Heart left ventricle (tissue), 16 donors: ENCODE measurements at regions of chr2 and their contacts with region 1.

Region 1: DNA sequence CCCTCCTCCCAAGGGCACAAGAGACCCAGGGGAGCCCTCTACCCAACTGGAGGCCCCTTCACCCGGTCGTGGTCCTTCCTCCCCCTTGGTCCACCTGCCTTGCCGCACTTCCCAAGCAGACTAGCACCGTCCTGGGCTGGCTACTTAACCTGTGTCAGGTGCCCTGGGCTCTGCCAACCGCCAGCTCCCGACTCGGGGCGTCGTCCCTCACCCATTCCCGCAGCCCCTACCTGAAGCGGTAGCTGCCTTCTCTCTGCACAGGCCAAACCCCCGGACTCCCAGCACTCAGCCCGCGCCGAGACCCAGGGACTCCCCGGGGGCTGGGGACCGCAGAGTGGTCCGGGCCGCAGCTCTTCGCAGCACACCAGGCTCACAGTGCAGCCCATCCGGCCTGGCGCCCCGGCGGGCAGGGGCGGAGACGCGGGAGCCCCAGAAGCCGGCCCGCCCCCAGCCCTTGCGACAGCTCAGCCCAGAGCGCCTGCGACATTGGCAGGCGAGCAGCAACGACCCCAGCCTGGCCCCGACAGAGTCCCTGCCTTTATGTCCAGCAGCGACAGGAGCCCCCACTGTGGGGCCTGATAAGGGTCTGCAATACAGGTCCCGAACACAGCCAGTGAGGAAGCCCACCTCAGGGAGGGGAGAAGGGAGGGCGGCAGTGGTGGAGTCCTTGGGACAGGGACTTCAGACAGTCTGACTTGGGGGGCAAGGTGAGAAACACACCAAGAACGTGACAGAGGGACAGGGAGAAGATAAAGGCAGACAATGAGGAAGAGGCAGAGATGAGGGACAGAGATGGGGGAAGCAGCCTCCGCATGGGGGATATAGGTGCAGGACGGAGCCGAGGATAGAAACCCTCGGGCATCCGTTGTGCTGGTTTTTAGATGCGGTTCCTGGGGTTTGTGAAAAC is 31.0 kb upstream of the TNS1 start:
- DNase-seq: peak in 3 of 5 donors; percentile 21 to 61 (median 29)
- ATAC-seq: no peak
- H3K4me3 ChIP-seq: peak overlapping the region in 4 of 12 donors; percentile 27 to 49 (median 47)
- H3K27ac ChIP-seq: peak overlapping the region in 1 of 12 donors; percentile 42
- H3K4me1 ChIP-seq: peaks cover 0 to 18% (median 9%) of the 10 kb centered on the region in 12 donors
- H3K27me3 ChIP-seq: peaks cover 0 to 5% (median 0%) of the 10 kb centered on the region in 9 donors
- CTCF ChIP-seq: no peak
- POLR2A ChIP-seq: no peak

Region 2: GRCh38 chr2:217993817-217994463 is 39.9 kb before region 1 on chr2:
- intact Hi-C with region 1: loop called in 9 of 10 experiments (anchors 2 to 5 kb)
- DNase-seq: peak in 4 of 5 donors; percentile 62 to 82 (median 71)
- ATAC-seq: peak; percentile 38 to 53 (median 44)
- H3K4me3 ChIP-seq: no peak overlapping the region
- H3K27ac ChIP-seq: peak overlapping the region in 3 of 12 donors; percentile 6 to 25 (median 10)
- H3K4me1 ChIP-seq: peaks cover 0 to 48% (median 25%) of the 10 kb centered on the region in 12 donors
- H3K27me3 ChIP-seq: no peaks in the 10 kb centered on the region
- CTCF ChIP-seq: peak; percentile 73 to 86 (median 80)
- POLR2A ChIP-seq: no peak

Region 3: DNA sequence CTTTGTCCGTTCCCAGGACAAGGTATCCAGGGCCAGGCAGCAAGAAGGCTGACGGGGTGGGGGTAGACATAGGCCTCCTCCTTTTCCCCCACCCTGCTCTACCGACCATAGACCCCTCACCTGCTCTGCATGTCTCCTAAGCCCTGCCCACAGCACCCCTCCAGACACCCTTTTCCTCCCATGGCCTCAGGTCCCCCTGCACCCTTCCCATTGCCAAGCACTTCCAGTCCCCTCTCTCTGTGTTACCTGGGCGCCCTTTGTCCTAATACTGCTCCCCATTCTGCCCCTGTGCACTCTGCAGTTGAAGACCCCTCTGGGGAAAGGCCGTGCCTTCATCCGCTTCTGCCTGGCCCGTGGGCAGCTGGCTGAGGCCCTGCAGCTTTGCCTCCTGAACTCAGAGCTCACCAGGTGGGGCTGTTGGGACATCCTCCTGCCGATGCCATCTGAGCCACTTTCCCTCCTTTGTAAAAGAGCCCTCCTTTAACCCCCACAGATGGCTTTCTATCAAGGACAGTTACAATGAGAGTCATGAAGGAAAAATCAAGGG is 38.7 kb after region 1 on chr2:
- intact Hi-C with region 1: loop called in 1 of 10 experiments (anchors 2 kb)
- DNase-seq: no peak
- ATAC-seq: no peak
- H3K4me3 ChIP-seq: no peak overlapping the region
- H3K27ac ChIP-seq: no peak overlapping the region
- H3K4me1 ChIP-seq: peaks cover 0 to 10% (median 1%) of the 10 kb centered on the region in 12 donors
- H3K27me3 ChIP-seq: peaks cover 0 to 9% (median 0%) of the 10 kb centered on the region in 9 donors
- CTCF ChIP-seq: no peak
- POLR2A ChIP-seq: no peak